ENCODE measurements at regions of chr6 and their contacts with region 1.

Region 1: DNA sequence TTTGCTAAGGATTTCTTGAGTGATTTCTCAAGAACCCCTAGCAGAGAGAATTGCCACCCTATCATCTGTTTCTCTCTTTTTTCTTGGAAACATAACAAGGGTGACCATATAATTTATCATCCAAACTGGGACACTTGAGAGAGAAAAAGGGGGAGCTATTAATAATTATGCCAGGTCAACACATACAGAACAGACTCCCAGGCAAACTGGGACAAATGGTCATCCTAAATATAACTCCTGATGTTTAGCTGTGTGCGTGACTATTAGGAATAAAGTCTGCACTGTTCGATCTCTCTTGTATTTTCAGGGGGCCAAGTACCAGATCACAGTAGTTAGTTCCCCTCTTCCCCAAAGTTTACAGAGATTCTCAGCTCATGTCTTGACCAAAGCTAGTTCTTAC is 11.7 kb upstream of the HS3ST5 start:
- DNase-seq: no peak
- H3K4me3 ChIP-seq: no peak overlapping the region
- H3K27ac ChIP-seq: no peak overlapping the region
- H3K4me1 ChIP-seq: no peaks in the 10 kb centered on the region
- H3K27me3 ChIP-seq: no peaks in the 10 kb centered on the region
- CTCF ChIP-seq: no peak
- POLR2A ChIP-seq: no peak

Region 2: DNA sequence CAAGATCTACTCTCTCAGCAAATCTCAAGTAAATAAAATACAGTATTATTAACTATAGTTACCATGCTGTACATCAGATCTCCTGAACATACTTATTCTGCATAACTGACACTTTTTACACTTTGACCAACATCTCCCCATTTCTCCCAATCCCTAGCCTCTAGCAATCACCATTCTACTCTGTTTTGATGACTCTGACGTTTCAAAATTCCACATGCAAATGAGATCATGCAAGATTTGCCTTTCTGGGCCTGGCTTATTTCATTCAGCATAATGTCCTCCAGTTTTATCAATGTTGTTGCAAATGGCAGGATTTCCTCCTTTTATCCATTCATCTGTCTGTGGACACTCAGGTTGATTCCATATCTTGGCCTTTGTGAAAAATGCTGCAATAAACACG is 1741.1 kb before region 1 on chr6:
- intact Hi-C with region 1: loop called (anchors 5 kb)
- DNase-seq: no peak
- H3K4me3 ChIP-seq: no peak overlapping the region
- H3K27ac ChIP-seq: no peak overlapping the region
- H3K4me1 ChIP-seq: no peaks in the 10 kb centered on the region
- H3K27me3 ChIP-seq: no peaks in the 10 kb centered on the region
- CTCF ChIP-seq: no peak
- POLR2A ChIP-seq: no peak

Region 3: GRCh38 chr6:115838763-115839401 is 1484.4 kb after region 1 on chr6:
- intact Hi-C with region 1: loop called (anchors 5 kb)
- DNase-seq: no peak
- H3K4me3 ChIP-seq: no peak overlapping the region
- H3K27ac ChIP-seq: no peak overlapping the region
- H3K4me1 ChIP-seq: no peaks in the 10 kb centered on the region
- H3K27me3 ChIP-seq: no peaks in the 10 kb centered on the region
- CTCF ChIP-seq: peak in 1 of 3 donors; percentile 26
- POLR2A ChIP-seq: no peak

Measured in breast epithelium (tissue), 4 donors.